ENCODE measurements at regions of chr16 and their contacts with region 1.

Region 1: DNA sequence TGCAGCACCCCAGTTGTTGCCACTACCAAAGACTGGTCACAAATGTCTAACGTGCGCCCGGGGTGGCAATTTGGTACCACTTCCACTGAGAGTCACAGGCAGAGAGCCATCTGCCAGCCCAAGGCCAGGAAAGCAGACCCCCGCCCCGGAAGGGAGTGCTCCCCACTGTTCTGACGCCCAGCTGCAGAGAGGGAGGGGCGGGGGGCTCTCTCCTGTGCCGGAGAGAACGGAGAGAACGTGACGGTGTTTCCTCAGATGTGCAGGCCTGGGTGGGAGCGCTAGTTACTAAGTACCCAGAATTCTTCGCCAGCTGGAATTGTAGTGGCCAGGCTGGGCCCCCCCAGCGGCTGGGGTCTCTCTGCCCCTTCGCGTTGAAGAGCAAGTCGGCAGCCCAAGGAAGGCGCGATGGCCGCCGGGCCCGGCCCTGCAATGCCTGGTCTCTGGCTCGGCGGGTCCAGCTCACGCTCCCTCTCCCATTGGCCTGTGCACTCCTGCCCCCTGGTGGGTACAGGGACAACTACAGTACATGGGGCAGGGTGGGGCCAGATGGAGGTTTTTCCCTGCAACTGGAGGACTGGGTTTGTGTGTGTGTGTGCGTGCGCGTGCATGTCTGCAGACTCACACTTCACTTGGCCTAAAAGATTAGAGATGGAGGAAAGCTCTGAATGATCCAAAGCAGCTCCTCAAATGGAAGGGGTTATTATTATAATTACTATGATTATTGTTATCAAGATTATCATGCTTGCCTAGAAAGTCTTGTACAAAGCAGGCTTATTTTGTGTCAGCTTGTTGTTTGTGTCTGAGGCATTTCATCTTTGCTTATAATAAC is 107.1 kb downstream of the AMFR start:
- DNase-seq: peak; percentile 91

Region 2: DNA sequence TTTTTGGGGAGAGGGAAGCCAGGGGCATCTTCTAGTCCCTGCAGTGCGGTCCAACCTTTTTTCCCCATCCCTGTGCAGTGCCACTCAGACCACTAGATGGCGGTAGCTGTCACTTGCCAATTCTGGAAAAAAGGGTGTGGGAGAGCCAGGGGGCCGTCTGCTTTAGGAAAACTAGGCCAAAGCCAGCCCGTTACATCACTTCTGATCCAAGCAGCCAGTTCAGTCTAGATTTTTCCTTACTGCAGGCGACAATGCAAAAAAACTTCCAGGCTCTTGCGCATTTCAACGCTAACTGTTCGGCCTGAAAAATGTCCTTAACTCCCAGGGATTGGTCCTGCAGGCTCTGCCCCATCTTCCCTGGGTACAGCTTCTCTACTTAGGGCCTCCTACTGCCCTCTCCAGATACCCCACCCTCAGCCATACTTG is 373.8 kb before region 1 on chr16:
- intact Hi-C with region 1: loop called (anchors 2 kb)
- DNase-seq: peak; percentile 79

Region 3: GRCh38 chr16:56041686-56042085 is 276.5 kb before region 1 on chr16:
- intact Hi-C with region 1: loop called (anchors 2 kb)
- DNase-seq: no peak

Region 4: GRCh38 chr16:56163938-56164337 is 154.3 kb before region 1 on chr16:
- intact Hi-C with region 1: no loop called
- DNase-seq: no peak

Region 5: DNA sequence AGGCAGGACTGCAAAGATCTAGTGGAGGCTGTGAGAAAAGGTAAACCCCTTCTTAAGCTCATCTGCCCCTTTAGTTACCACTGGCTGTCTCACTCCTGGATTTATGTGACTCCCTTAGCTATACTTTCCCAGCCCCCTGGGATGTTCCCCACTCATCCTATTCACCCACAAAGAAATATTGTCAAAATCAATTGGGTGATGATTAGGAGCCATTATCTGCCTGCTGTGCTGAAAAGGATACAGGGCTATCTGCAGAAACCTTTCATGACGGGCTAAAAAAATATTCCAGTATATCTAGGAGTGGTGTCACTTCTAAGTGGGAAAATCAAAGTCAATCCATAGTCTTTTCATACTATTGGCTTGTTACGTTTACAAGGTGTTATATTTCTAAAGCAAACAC is 134.9 kb before region 1 on chr16:
- intact Hi-C with region 1: no loop called
- DNase-seq: no peak

Region 6: GRCh38 chr16:56246051-56246817 is 72.0 kb before region 1 on chr16:
- intact Hi-C with region 1: no loop called
- DNase-seq: no peak

Measured in cardiac septum (tissue), 1 donor.